Ascending aorta (tissue), 2 donors: ENCODE measurements at regions of chr7 and their contacts with region 1.

Region 1: GRCh38 chr7:131107337-131108211 is 220.1 kb upstream of the MKLN1 start:
- DNase-seq: peak; percentile 46 to 87
- H3K4me3 ChIP-seq: peak overlapping the region; percentile 81 to 99
- H3K27ac ChIP-seq: peak overlapping the region; percentile 96 to 100
- H3K4me1 ChIP-seq: peaks cover 0 to 14% of the 10 kb centered on the region in 2 donors
- H3K27me3 ChIP-seq: no peaks in the 10 kb centered on the region
- CTCF ChIP-seq: no peak

Region 2: GRCh38 chr7:130668257-130669084 is 439.1 kb before region 1 on chr7 and contains the start of gene COPG2:
- intact Hi-C with region 1: loop called (anchors 10 kb)
- DNase-seq: peak; percentile 22 to 88
- H3K4me3 ChIP-seq: peak within 1 kb of the TSS; percentile 83 to 89
- H3K27ac ChIP-seq: peak within 1 kb of the TSS; percentile 68 to 70
- H3K4me1 ChIP-seq: peaks cover 0 to 3% of the 10 kb centered on the region in 2 donors
- H3K27me3 ChIP-seq: no peaks in the 10 kb centered on the region
- CTCF ChIP-seq: no peak
- total RNA-seq, gene COPG2: 5.4 TPM

Region 3: DNA sequence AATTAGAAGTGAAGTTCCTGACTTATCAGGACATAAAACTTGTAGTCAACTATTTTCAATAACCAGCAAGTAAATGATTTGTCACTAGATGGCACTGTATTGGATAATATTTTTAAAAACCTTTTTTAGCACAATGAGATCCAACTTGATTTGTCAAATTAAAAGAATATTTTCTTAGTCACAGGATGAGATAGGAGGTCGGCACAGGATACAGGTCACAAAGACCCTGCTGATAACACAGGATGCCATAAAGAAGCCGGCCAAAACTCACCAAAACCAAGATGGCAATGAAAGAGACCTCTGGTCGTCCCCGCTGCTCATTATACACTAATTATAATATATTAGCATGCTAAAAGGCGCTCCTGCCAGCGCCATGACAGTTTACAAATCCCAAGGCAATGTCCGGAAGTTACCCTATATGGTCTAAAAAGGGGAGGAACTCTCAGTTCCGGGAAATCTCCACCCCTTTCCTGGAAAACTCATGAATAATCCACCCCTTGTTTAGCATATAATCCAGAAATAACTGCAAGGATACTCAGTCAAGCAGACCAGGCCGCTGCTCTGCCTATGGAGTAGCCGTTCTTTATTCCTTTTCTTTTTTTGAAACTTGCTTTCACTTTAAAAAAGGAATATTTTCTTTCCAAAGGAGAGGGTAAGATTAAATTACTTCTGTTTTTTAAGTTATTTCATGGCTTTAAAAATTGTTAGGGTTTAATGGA is 35.6 kb before region 1 on chr7:
- intact Hi-C with region 1: loop called (anchors 5 kb)
- DNase-seq: peak in 1 of 2 donors; percentile 82
- H3K4me3 ChIP-seq: peak overlapping the region; percentile 18 to 24
- H3K27ac ChIP-seq: peak overlapping the region; percentile 16 to 71
- H3K4me1 ChIP-seq: peaks cover 4 to 54% of the 10 kb centered on the region in 2 donors
- H3K27me3 ChIP-seq: no peaks in the 10 kb centered on the region
- CTCF ChIP-seq: peak in 2 of 3 experiments; percentile 27 to 40

Region 4: GRCh38 chr7:131284702-131285419 is 177.3 kb after region 1 on chr7:
- intact Hi-C with region 1: loop called (anchors 2 kb)
- DNase-seq: peak; percentile 53 to 93
- H3K4me3 ChIP-seq: peak overlapping the region in 1 of 2 donors; percentile 29
- H3K27ac ChIP-seq: peak overlapping the region; percentile 91 to 92
- H3K4me1 ChIP-seq: peaks cover 11 to 28% of the 10 kb centered on the region in 2 donors
- H3K27me3 ChIP-seq: no peaks in the 10 kb centered on the region
- CTCF ChIP-seq: no peak

Region 5: DNA sequence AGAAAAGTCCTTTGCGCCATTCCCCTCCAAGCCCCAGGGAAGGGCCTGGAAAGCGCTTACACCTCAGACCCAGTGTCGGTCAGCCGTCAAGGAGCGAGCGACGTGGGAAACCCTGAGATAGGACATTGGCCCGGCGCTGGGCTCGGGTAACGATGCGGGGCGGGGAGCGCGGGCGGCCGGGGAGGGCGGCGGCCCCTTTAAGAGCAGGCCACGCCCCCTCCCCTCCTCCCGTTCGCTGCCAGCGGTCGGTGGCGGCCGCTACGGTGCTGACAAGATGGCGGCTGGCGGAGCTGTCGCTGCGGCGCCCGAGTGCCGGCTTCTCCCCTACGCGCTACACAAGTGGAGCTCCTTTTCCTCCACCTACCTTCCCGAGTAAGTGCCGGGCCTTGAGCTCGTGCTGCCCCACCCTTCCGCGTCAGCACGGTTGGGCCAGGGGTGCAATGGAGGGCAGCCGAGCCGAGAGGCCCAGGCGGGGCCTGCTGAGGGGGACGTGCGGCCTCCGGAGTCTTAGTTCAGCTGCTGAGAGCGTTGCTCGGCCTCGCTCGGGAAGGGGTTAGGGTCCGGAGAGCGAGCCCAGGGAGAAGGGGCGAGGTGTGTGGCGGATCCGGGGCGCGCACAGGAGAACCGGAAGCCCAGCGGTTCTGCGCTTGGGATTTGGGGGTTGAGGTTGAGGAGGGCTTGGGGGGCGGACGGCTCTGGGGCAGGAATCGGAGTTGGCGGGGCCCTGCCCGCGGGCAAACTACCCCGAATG is 220.2 kb after region 1 on chr7 and contains the start of gene MKLN1:
- intact Hi-C with region 1: loop called (anchors 2 kb)
- DNase-seq: peak; percentile 68 to 95
- H3K4me3 ChIP-seq: peak within 1 kb of the TSS; percentile 72 to 93
- H3K27ac ChIP-seq: peak within 1 kb of the TSS; percentile 95 to 97
- H3K4me1 ChIP-seq: peaks cover 0 to 10% of the 10 kb centered on the region in 2 donors
- H3K27me3 ChIP-seq: no peaks in the 10 kb centered on the region
- CTCF ChIP-seq: no peak
- total RNA-seq, gene MKLN1: 18.0 TPM